ENCODE measurements at regions of chr13 and their contacts with region 1.

Region 1: GRCh38 chr13:28658796-28659620 is at the start of gene POMP:
- DNase-seq: peak; percentile 98
- H3K4me3 Mint-ChIP-seq: peak within 1 kb of the TSS; percentile 97
- H3K27ac Mint-ChIP-seq: peak within 1 kb of the TSS; percentile 99
- H3K4me1 Mint-ChIP-seq: peaks cover 49% of the 10 kb centered on the region
- H3K27me3 Mint-ChIP-seq: no peaks in the 10 kb centered on the region
- total RNA-seq, gene POMP: 152 and 161 TPM in 2 replicates

Region 2: GRCh38 chr13:28138012-28138755 is 520.8 kb before region 1 on chr13 and contains the start of gene PAN3:
- intact Hi-C with region 1: loop called (anchors 1 kb)
- DNase-seq: peak; percentile 98
- H3K4me3 Mint-ChIP-seq: peak within 1 kb of the TSS; percentile 88
- H3K27ac Mint-ChIP-seq: peak within 1 kb of the TSS; percentile 95
- H3K4me1 Mint-ChIP-seq: peaks cover 42% of the 10 kb centered on the region
- H3K27me3 Mint-ChIP-seq: no peaks in the 10 kb centered on the region
- total RNA-seq, gene PAN3: 31.2 and 32.7 TPM in 2 replicates

Region 3: GRCh38 chr13:28357911-28358433 is 301.0 kb before region 1 on chr13:
- intact Hi-C with region 1: no loop called
- DNase-seq: no peak
- H3K4me3 Mint-ChIP-seq: peak overlapping the region; percentile 11
- H3K27ac Mint-ChIP-seq: peak overlapping the region; percentile 18
- H3K4me1 Mint-ChIP-seq: peaks cover 43% of the 10 kb centered on the region
- H3K27me3 Mint-ChIP-seq: no peaks in the 10 kb centered on the region

Region 4: DNA sequence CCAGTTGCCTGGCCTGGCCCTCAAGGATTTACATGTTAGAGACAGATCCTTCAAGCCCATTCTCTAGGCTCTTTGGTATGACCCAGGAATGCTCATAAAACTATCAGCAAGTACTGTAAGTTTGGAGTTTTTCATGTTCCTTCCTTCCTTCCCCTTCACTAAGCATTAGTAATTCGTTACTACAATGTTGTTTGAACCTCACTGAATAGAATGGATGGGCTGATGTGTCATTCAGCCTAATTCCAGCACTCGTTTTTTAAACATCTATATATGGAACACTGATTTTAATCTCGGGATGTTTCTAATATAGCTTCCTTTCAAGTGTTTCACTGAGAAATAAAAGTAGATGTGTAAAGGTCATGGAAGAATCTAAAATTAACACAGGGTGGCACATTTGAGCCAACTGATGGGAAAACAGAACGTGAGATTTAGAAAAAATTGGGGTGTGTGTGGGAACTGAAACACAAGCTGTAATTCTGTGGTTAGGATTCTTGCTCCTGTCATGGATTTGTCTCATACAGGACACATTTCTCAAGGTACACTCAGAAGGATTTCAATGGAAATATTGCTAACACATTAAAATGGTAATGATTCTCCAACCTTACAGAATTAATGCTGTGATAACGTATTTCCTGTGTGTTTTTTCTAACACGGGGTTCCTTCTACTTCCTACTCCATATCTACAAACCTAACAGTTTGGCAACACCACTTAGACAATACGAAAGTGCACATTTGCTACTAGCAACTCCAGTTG is 257.5 kb before region 1 on chr13:
- intact Hi-C with region 1: loop called (anchors 5 kb)
- DNase-seq: no peak
- H3K4me3 Mint-ChIP-seq: no peak overlapping the region
- H3K27ac Mint-ChIP-seq: no peak overlapping the region
- H3K4me1 Mint-ChIP-seq: peaks cover 9% of the 10 kb centered on the region
- H3K27me3 Mint-ChIP-seq: no peaks in the 10 kb centered on the region

Region 5: DNA sequence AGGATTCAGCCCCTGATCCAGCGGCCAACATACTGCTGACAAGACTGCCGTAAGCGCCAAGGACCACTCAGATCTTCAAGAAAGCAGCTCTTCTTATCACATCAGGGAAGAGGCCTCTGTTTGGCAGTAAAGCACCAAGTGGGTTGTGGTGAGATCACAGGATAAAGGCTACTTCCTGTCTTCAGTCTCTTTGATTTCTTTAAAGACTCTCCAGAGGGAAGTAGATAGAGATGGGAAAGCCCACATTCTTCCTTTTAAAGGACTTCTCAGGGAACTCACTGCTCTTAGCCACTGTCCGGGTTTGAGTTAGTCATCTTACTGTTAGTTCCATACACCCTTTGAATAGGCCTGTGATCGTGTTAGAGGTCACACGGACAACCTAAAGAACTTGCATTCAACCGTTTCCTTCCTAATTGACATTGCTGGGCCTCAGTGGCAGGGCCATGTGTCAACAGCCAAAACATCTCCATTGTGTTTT is 47.3 kb before region 1 on chr13:
- intact Hi-C with region 1: loop called (anchors 2 kb)
- DNase-seq: peak; percentile 81
- H3K4me3 Mint-ChIP-seq: peak overlapping the region; percentile 53
- H3K27ac Mint-ChIP-seq: peak overlapping the region; percentile 68
- H3K4me1 Mint-ChIP-seq: peaks cover 28% of the 10 kb centered on the region
- H3K27me3 Mint-ChIP-seq: no peaks in the 10 kb centered on the region

Region 6: GRCh38 chr13:28718543-28719226 is 59.7 kb after region 1 on chr13 and contains the start of gene SLC46A3:
- intact Hi-C with region 1: loop called (anchors 1 kb)
- DNase-seq: peak; percentile 99
- H3K4me3 Mint-ChIP-seq: peak within 1 kb of the TSS; percentile 97
- H3K27ac Mint-ChIP-seq: peak within 1 kb of the TSS; percentile 86
- H3K4me1 Mint-ChIP-seq: peaks cover 23% of the 10 kb centered on the region
- H3K27me3 Mint-ChIP-seq: peaks cover 5% of the 10 kb centered on the region
- total RNA-seq, gene SLC46A3: 3.1 and 3.3 TPM in 2 replicates

Measured in activated CD4-positive, alpha-beta T cell treated with anti-CD3 and anti-CD28 coated beads, Interleukin-2, amount 10 ng/mL, durations not matched to agents 24 days and 14 days (primary cell).